OCI-LY7 (cell line): ENCODE measurements at regions of chr3 and their contacts with region 1.

Region 1: DNA sequence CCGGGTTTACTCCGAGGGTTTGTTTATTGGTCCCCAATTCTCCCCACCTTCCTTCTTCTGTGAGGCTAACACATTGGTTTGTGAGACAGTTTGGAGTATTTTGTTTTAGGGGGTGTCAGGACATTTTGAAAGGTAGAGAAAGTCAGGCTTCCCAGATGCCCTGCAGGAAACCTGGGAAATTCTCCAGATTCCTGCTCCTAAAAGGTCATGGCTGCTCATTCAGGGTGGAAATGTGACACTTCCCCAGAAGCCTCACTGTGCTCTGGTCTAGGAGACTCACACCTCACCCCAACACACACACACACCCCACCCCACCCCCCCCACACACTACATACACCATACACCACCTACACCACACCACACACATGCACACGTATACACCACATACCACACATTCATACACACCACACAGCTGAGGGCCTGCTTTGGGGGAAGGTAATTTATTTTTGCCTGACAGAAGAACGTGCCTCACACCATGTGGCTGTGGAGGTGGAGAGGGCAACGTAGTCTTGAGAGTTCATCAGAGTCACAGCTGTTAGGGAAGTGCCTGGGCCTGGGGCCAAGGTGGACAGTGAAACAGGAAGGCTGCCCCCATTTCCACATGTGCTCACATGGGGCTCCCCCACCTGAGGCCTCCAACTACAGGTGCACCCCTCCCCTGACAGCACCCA is 40.4 kb upstream of the LIMD1 start:
- DNase-seq: peak; percentile 76
- H3K4me3 ChIP-seq: peak overlapping the region; percentile 43
- H3K27ac ChIP-seq: peak overlapping the region; percentile 67
- H3K4me1 ChIP-seq: peaks cover 34% of the 10 kb centered on the region
- CTCF ChIP-seq: no peak

Region 2: GRCh38 chr3:45612918-45613602 is 58.9 kb after region 1 on chr3:
- CTCF ChIA-PET with region 1: interaction called, 6 read pairs
- POLR2A ChIA-PET with region 1: no interaction called
- intact Hi-C with region 1: loop called (anchors 1 kb)
- DNase-seq: peak; percentile 86
- H3K4me3 ChIP-seq: no peak overlapping the region
- H3K27ac ChIP-seq: no peak overlapping the region
- H3K4me1 ChIP-seq: peaks cover 41% of the 10 kb centered on the region
- CTCF ChIP-seq: no peak